Posterior vena cava (tissue), 2 donors: ENCODE measurements at regions of chr9 and their contacts with region 1.

Region 1: DNA sequence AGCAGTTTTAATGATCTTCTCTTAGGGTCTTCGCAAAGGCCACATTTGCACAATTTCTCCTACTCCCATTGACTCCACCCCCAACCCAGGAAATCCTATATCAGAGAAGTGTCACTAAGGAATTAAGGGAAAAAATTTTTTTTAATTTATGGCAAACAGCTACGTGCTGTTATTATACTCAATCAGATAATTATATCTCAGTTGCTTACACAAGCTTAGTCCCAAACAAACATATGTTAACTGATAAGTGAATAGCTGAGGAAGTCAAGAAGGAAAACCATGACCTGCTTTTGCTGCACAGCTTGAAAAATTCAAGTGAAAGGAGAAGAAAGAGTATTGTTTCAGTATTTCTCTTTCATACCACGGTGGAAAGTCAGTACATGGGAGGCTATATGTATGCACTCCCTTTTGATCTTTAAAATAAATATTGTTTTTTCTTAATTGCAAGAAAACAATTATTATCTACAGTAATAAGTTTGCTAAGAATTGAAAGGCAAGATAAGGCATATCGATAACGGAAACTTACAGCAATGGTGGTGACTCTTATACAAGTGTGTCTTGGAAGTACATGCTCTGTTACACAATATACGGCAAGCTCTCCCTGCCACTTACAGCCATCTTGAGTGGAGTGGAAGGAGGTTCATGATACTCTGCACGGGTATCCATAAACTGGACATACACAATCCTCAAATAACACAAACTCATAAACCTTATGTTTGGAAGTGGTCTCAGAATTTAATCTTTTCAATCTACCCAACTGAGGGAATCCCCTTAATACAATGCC is 167.9 kb upstream of the FREM1 start:
- DNase-seq: no peak

Region 2: DNA sequence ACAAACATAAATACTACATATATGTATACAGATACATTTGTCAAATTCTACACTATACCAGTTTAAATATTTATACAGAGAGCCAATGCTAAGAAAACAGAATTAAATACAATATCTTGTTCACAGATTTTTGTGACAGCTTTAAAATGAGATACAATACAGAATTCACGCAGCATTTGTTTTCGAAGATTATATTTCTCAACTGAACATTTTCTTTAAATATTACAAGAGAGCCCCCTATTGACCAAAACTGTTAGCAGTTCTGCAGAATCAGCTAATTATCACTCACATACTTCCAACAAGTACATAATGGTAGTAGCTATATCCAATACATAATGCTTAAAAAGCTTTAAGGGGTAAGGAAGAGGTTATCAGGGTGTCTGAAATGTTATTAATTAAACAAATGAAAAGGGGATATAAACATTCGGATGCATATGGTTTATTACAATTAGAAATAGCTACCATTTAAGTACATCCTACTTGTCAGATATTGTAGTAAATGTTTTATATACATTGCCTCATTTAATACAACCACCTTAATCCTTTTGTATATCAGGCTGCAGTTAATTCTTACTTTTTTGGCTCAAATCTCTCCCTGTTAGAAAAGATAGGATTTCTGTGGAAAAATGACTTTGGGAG is 416.6 kb before region 1 on chr9:
- intact Hi-C with region 1: no loop called
- DNase-seq: no peak

Region 3: DNA sequence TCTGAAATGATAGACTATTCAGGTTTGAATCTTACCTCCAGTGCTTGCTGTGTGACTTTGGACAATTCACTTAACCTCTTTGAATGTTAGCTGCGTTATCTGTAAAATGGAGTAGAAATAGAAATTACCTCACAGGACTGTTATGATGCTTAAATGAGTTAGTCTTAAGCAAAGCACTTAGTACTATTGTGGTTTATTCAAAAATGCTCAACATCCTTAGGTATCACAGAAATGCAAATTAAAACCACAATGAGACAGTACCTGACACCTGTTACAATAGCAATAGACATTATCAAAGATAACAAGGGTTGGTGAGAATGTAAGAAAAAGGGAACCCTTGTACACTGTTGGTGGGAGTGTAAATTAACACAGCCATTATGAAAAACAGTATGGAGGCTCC is 90.3 kb before region 1 on chr9:
- intact Hi-C with region 1: loop called in 1 of 2 experiments (anchors 2 kb)
- DNase-seq: no peak